ENCODE measurements at regions of chr16 and their contacts with region 1.

Region 1: GRCh38 chr16:81639956-81640680 is 139.0 kb upstream of the PLCG2 start:
- DNase-seq: no peak
- ATAC-seq: no peak
- H3K4me3 ChIP-seq: no peak overlapping the region
- H3K4me3 Mint-ChIP-seq: no peak overlapping the region
- H3K27ac ChIP-seq: no peak overlapping the region
- H3K27ac Mint-ChIP-seq: peak overlapping the region in 1 of 2 donors; percentile 22
- H3K4me1 ChIP-seq: peaks cover 0 to 6% of the 10 kb centered on the region in 2 experiments
- H3K4me1 Mint-ChIP-seq: peaks cover 25 to 37% (median 29%) of the 10 kb centered on the region in 3 donors
- H3K27me3 ChIP-seq: no peaks in the 10 kb centered on the region
- H3K27me3 Mint-ChIP-seq: no peaks in the 10 kb centered on the region

Region 2: GRCh38 chr16:81650982-81651562 is 11.0 kb after region 1 on chr16:
- CTCF ChIA-PET with region 1: interaction called in 1 of 2 experiments, 10 read pairs
- POLR2A ChIA-PET with region 1: no interaction called
- DNase-seq: no peak
- ATAC-seq: no peak
- H3K4me3 ChIP-seq: no peak overlapping the region
- H3K4me3 Mint-ChIP-seq: no peak overlapping the region
- H3K27ac ChIP-seq: no peak overlapping the region
- H3K27ac Mint-ChIP-seq: no peak overlapping the region
- H3K4me1 ChIP-seq: no peaks in the 10 kb centered on the region
- H3K4me1 Mint-ChIP-seq: peaks cover 3 to 13% (median 8%) of the 10 kb centered on the region in 3 donors
- H3K27me3 ChIP-seq: no peaks in the 10 kb centered on the region
- H3K27me3 Mint-ChIP-seq: no peaks in the 10 kb centered on the region